Heart right ventricle (tissue), 16 donors: ENCODE measurements at regions of chr2 and their contacts with region 1.

Region 1: DNA sequence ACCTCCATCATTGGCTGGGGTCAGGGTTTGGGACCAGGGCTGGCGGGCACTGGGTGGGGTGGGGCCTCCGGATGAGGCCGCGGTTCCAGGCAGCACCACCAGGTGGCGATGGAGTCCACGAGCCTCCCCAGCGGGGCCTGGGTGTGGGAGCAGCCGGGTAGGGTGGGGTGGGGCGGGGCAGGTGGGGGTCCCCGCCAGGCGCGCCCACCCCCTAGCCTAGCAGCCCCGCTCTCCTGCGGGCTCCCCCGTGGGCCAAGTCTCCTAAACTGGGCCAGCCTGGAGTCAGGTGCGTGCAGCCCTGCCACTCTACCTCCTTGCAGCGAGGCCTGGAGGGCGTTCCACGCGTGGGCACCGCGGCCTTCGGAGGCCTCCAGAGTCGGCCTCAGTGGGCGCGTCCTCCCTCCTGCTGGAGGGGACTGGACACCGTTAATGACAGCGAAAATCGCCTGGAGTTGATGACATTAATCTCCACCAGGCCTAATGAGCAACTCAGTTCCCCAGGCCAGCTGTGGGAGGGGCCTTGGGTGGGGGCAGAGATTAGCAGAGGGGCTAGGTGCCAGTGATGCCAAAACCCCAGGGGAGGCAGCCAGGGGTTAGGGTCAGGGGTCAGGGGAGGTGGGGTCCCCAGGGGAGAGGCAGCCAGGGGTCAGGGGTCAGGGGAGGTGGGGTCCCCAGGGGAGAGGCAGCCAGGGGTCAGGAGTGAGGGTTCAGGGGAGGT is 187.6 kb downstream of the TWIST2 start:
- DNase-seq: peak; percentile 32 to 70
- ATAC-seq: peak; percentile 68 to 89 (median 86)
- H3K4me3 ChIP-seq: no peak overlapping the region
- H3K27ac ChIP-seq: no peak overlapping the region
- H3K4me1 ChIP-seq: peaks cover 0 to 5% (median 0%) of the 10 kb centered on the region in 9 donors
- H3K27me3 ChIP-seq: peaks cover 0 to 35% (median 14%) of the 10 kb centered on the region in 7 donors
- CTCF ChIP-seq: peak; percentile 85 to 94 (median 91)

Region 2: GRCh38 chr2:239106314-239106908 is 70.9 kb after region 1 on chr2:
- intact Hi-C with region 1: loop called in 6 of 10 experiments (anchors 5 to 10 kb)
- DNase-seq: peak; percentile 40 to 44
- ATAC-seq: peak; percentile 44 to 76 (median 68)
- H3K4me3 ChIP-seq: no peak overlapping the region
- H3K27ac ChIP-seq: no peak overlapping the region
- H3K4me1 ChIP-seq: peaks cover 0 to 18% (median 0%) of the 10 kb centered on the region in 9 donors
- H3K27me3 ChIP-seq: no peaks in the 10 kb centered on the region
- CTCF ChIP-seq: peak; percentile 8 to 65 (median 50)

Region 3: DNA sequence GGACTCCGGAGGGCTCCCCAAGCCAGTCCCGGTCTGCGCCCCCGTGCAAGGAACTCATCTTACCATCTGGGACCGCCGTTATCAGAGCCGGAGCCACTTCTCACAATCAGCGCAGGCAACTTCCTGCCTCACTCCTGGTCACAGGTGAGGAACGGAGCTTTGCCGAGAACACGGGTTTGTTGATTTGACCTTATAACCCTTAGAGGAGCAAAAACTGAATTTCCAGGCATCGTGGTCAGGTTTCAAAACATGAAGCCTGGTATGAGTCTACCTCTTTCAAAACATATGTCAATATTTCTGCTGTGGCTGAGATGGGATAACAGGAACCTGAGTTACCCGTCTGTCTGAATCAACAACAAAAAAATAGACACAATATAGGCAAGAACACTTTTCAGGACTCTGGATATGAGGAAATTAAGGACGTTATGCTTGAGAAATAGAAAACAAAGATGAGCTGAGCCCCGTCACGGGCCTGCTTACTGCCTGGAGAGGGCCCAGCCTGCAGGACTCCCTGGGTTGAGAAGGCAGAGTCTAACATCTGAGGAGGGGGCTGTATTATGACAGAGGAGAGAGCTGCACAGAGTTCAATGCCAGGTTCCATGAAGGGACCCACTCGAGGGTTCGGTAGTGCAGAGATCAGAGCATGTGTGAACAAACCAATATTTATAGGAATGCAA is 840.9 kb after region 1 on chr2:
- intact Hi-C with region 1: loop called in 5 of 10 experiments (anchors 5 to 10 kb)
- DNase-seq: no peak
- ATAC-seq: no peak
- H3K4me3 ChIP-seq: no peak overlapping the region
- H3K27ac ChIP-seq: no peak overlapping the region
- H3K4me1 ChIP-seq: peaks cover 0 to 5% (median 3%) of the 10 kb centered on the region in 9 donors
- H3K27me3 ChIP-seq: peaks cover 0 to 39% (median 10%) of the 10 kb centered on the region in 7 donors
- CTCF ChIP-seq: no peak

Region 4: GRCh38 chr2:239882331-239882732 is 846.8 kb after region 1 on chr2:
- intact Hi-C with region 1: loop called in 5 of 10 experiments (anchors 5 to 10 kb)
- DNase-seq: peak in 1 of 2 donors; percentile 41
- ATAC-seq: peak; percentile 58 to 87 (median 68)
- H3K4me3 ChIP-seq: no peak overlapping the region
- H3K27ac ChIP-seq: peak overlapping the region in 1 of 10 donors; percentile 25
- H3K4me1 ChIP-seq: peaks cover 0 to 12% (median 9%) of the 10 kb centered on the region in 9 donors
- H3K27me3 ChIP-seq: peaks cover 0 to 16% (median 0%) of the 10 kb centered on the region in 7 donors
- CTCF ChIP-seq: peak; percentile 21 to 74 (median 66)

Region 5: GRCh38 chr2:239979243-239980023 is 943.9 kb after region 1 on chr2:
- intact Hi-C with region 1: loop called in 1 of 10 experiments (anchors 10 kb)
- DNase-seq: no peak
- ATAC-seq: peak in 7 of 8 donors; percentile 45 to 71 (median 49)
- H3K4me3 ChIP-seq: no peak overlapping the region
- H3K27ac ChIP-seq: no peak overlapping the region
- H3K4me1 ChIP-seq: peaks cover 0 to 8% (median 0%) of the 10 kb centered on the region in 9 donors
- H3K27me3 ChIP-seq: no peaks in the 10 kb centered on the region
- CTCF ChIP-seq: peak in 6 of 9 donors; percentile 17 to 36 (median 23)

Region 6: DNA sequence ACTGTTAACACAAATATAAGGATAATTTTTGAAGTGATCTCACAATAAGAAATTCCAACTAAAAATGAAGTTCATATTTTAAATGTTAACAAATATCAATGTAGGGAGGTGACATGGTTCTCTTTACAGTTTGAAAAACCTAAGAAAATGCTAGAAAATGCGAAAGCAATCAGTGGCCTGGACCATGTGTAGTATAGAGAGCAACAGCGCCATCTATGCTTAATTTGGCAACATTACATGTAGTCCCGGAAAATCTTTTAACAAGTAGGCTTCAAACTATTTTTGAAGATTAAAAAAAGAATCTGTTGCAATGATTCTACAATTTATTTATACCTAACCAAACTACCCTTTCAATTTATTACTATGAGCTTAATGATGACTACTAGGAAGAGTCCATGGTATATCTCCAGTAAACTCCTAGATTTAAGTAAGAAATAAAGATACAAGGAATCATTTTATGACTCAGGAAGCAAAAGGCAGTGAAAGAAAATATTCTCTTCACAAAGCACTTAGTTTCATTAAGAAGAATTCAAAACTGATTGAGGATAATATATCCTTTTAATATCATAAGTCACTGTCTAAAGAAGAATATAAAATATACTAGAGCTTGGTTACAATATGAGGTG is 956.3 kb after region 1 on chr2:
- intact Hi-C with region 1: loop called in 7 of 10 experiments (anchors 5 to 10 kb)
- DNase-seq: no peak
- ATAC-seq: peak in 4 of 8 donors; percentile 25 to 75 (median 56)
- H3K4me3 ChIP-seq: no peak overlapping the region
- H3K27ac ChIP-seq: no peak overlapping the region
- H3K4me1 ChIP-seq: no peaks in the 10 kb centered on the region
- H3K27me3 ChIP-seq: no peaks in the 10 kb centered on the region
- CTCF ChIP-seq: peak; percentile 66 to 91 (median 82)

Region 7: GRCh38 chr2:240143801-240144648 is 1108.5 kb after region 1 on chr2:
- intact Hi-C with region 1: loop called in 6 of 10 experiments (anchors 10 kb)
- DNase-seq: peak; percentile 60 to 74
- ATAC-seq: peak; percentile 76 to 87 (median 84)
- H3K4me3 ChIP-seq: no peak overlapping the region
- H3K27ac ChIP-seq: no peak overlapping the region
- H3K4me1 ChIP-seq: peaks cover 0 to 7% (median 0%) of the 10 kb centered on the region in 9 donors
- H3K27me3 ChIP-seq: peaks cover 0 to 56% (median 23%) of the 10 kb centered on the region in 7 donors
- CTCF ChIP-seq: peak; percentile 80 to 97 (median 95)